HEK293 (cell line): ENCODE measurements at regions of chr1 and their contacts with region 1.

Region 1: DNA sequence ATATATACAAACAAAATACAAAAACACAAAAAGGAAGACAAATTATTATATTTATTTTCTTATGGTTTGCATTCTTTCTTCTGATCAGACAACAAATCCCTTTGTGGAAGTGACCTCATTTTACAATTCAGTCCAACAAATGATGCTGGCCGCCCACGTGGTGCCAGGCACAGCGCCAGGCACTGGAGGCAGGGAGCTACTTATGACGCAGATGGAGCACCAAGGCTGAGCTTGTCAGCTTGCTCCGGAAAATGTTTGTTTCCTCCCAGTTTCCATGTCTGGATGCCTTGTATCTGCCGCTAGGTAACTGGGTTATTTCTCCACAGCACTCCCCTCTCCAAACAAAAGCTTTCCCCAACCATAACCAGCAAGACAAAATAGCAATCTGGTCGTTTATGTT is 30.7 kb upstream of the CD34 start:
- H3K4me3 ChIP-seq: no peak overlapping the region
- H3K27ac ChIP-seq: no peak overlapping the region
- H3K4me1 ChIP-seq: no peaks in the 10 kb centered on the region
- CTCF ChIP-seq: no peak

Region 2: DNA sequence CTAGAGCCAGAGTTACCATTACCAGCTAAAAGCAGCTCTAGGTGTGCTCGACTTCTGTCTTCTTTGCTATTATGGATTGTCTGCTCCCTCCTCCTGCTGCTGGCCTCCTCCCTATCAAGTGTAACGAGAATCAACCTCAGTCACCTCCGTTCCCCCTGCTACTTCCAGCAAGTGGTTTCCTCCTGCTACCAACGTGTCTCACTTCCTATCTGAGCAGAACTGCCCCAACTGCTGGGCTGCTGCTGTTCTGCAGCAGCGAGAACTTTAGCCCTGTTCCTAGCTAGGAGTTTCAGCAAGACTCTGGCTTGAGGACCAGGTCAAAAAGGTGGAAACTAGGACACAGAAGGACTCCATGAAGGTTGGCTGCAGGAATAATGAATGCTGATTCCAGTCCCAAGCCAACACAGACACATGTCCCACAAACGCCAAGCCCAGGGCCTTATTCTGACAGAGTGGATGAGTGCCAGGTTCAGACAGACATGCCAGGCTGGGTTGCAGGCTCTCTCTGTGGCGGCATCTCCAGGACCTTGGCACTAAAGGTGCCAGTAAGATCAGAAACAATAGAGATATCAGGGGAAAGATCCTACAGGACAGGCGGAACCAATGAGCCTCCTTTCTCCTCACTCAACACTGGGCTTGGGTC is 77.7 kb before region 1 on chr1:
- CTCF ChIA-PET with region 1: interaction called, 5 read pairs
- POLR2A ChIA-PET with region 1: interaction called, 13 read pairs
- H3K4me3 ChIP-seq: no peak overlapping the region
- H3K27ac ChIP-seq: no peak overlapping the region
- H3K4me1 ChIP-seq: 0 out of 2 replicates have a peak, but pooled peaks cover 2% of the 10 kb centered on the region
- CTCF ChIP-seq: no peak